AG04449 (cell line): ENCODE measurements at regions of chr19 and their contacts with region 1.

Region 1: GRCh38 chr19:10120538-10121189 is 965 bp upstream of the EIF3G start:
- DNase-seq: peak; percentile 55
- H3K4me3 ChIP-seq: no peak overlapping the region; the same call in 1 of the 2 replicates
- CTCF ChIP-seq: no peak

Region 2: DNA sequence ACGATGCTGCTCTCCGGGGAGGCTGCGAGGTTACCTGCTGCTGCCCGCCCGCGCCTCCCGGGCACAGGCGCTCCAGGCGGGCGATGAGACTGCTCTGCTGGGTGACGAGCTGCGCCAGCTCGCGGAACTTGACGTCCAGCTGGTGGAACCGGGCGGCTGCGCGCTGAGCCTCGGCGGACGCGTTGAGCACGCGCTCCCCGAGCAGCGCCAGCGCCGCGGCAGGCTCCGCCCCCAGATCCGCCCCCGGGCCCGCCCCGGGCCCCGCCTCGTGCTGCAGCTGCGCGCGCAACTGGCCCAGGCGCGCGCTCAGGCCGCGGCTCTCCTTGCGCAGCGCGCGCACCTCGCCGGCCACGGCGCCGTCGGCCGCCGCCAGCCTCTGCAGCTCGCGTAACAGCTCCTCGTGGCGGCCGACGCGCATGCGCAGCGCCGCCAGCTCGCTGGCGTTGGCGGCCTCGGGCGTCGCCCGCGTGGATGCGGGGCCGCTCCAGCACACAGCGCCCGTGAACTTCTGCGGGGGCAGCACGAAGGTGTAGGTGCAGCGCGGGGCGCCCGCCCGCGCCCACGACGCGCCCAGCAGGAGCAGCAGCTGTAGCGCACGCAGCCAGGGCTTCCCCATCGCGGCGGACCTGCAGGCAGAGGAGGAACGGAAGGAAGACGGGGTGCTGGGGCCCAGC is 24.6 kb before region 1 on chr19:
- CTCF ChIA-PET with region 1: interaction called, 18 read pairs
- POLR2A ChIA-PET with region 1: interaction called, 3 read pairs
- DNase-seq: no peak
- H3K4me3 ChIP-seq: peak overlapping the region; percentile 59
- CTCF ChIP-seq: no peak

Region 3: DNA sequence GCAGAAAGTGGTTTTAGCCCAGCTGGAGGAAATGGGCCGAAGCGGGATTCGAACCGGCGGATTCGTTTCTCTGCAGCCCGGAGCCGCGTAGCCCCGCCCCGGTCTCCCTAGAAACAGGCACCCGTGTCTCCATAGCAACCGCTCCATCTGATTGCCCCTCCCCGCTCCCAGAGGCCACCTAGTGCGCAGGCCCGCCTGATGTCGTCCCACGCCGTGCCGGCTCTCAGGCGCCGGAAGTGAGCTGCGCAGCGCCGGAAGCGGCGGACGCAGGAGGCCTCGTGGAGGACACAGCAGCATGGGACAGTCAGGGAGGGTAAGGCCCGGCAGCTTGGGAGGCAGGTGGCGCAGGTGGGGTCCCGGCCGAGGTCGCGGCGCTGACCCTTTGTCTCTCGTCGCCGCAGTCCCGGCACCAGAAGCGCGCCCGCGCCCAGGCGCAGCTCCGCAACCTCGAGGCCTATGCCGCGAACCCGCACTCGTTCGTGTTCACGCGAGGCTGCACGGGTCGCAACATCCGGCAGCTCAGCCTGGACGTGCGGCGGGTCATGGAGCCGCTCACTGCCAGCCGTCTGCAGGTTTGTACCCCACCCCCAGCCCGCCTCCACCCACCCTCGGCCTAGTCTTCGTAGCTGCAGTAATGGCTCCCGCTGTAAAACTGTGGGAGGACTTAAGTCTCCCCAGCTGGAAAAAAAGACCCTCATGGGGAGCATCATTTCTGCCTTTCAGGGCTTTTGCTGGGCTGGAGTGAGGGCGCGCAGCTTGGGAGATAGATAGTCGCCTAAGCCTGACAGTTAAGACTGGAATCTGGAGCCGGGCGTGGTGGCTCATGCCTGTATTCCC is 14.3 kb before region 1 on chr19 and contains the start of gene PPAN:
- CTCF ChIA-PET with region 1: interaction called, 93 read pairs
- POLR2A ChIA-PET with region 1: interaction called, 34 read pairs
- DNase-seq: peak; percentile 83
- H3K4me3 ChIP-seq: peak within 1 kb of the TSS; percentile 86
- CTCF ChIP-seq: no peak

Region 4: GRCh38 chr19:10132905-10133304 is 12.2 kb after region 1 on chr19:
- CTCF ChIA-PET with region 1: interaction called, 35 read pairs
- POLR2A ChIA-PET with region 1: no interaction called
- DNase-seq: no peak
- H3K4me3 ChIP-seq: no peak overlapping the region
- CTCF ChIP-seq: no peak